Uterus (tissue), 4 donors: ENCODE measurements at regions of chr1 and their contacts with region 1.

Region 1: GRCh38 chr1:39609618-39610331 is 29.7 kb downstream of the HEYL start:
- DNase-seq: peak; percentile 56 to 76
- H3K4me3 ChIP-seq: no peak overlapping the region
- H3K27ac ChIP-seq: peak overlapping the region in 1 of 2 donors; percentile 32
- H3K4me1 ChIP-seq: no peaks in the 10 kb centered on the region
- H3K27me3 ChIP-seq: no peaks in the 10 kb centered on the region
- CTCF ChIP-seq: peak; percentile 34 to 69 (median 50)
- POLR2A ChIP-seq: no peak

Region 2: GRCh38 chr1:39545531-39545930 is 64.2 kb before region 1 on chr1:
- intact Hi-C with region 1: no loop called
- DNase-seq: no peak
- H3K4me3 ChIP-seq: no peak overlapping the region
- H3K27ac ChIP-seq: no peak overlapping the region
- H3K4me1 ChIP-seq: no peaks in the 10 kb centered on the region
- H3K27me3 ChIP-seq: no peaks in the 10 kb centered on the region
- CTCF ChIP-seq: no peak
- POLR2A ChIP-seq: no peak

Region 3: DNA sequence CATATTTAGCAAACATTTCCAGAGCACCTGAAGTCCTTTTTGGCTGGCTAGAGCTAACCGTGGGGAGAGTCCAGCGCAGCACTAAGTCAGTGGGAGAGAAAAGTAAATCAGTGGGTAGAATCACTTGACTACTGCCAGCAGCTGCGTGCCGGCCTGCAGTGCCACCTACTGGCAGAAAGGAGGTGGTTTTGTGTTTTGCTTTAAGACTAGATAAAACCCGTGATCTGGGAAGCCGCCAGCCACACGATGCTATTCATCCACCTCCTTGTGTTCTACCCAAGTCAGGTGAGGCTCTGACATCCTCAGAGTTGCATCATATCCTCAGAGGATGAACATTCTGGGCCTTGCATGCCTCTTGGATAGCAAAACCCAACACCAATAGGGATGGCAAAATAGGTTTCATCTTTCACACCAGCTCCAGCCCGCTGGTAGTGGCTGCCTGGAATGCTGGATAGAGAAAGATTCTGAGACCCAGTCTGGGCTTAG is 43.8 kb after region 1 on chr1:
- intact Hi-C with region 1: loop called (anchors 5 kb)
- DNase-seq: peak; percentile 86 to 88
- H3K4me3 ChIP-seq: no peak overlapping the region
- H3K27ac ChIP-seq: peak overlapping the region in 1 of 2 donors; percentile 38
- H3K4me1 ChIP-seq: no peaks in the 10 kb centered on the region
- H3K27me3 ChIP-seq: no peaks in the 10 kb centered on the region
- CTCF ChIP-seq: peak; percentile 90 to 97 (median 94)
- POLR2A ChIP-seq: no peak

Region 4: DNA sequence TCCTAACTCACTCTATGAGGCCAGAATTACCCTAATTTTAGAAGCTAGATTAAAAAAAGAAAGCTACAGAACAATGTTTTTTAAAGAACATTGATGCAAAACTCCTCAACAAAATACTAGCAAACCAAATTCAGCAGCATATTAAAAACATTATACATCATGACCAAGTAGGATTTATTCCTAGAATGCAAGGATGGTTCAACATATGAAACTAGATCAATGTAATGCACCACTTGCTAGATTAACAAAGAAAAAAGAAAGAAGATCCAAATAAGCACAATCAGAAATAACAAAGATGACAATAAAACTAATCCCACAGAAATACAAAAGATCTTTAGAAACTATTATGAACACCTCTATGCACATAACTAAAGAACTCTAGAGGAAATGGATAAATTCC is 500.6 kb after region 1 on chr1:
- intact Hi-C with region 1: no loop called
- DNase-seq: no peak
- H3K4me3 ChIP-seq: no peak overlapping the region
- H3K27ac ChIP-seq: no peak overlapping the region
- H3K4me1 ChIP-seq: no peaks in the 10 kb centered on the region
- H3K27me3 ChIP-seq: no peaks in the 10 kb centered on the region
- CTCF ChIP-seq: no peak
- POLR2A ChIP-seq: no peak